Left ventricle myocardium inferior (tissue), 1 donor: ENCODE measurements at regions of chr6 and their contacts with region 1.

Region 1: DNA sequence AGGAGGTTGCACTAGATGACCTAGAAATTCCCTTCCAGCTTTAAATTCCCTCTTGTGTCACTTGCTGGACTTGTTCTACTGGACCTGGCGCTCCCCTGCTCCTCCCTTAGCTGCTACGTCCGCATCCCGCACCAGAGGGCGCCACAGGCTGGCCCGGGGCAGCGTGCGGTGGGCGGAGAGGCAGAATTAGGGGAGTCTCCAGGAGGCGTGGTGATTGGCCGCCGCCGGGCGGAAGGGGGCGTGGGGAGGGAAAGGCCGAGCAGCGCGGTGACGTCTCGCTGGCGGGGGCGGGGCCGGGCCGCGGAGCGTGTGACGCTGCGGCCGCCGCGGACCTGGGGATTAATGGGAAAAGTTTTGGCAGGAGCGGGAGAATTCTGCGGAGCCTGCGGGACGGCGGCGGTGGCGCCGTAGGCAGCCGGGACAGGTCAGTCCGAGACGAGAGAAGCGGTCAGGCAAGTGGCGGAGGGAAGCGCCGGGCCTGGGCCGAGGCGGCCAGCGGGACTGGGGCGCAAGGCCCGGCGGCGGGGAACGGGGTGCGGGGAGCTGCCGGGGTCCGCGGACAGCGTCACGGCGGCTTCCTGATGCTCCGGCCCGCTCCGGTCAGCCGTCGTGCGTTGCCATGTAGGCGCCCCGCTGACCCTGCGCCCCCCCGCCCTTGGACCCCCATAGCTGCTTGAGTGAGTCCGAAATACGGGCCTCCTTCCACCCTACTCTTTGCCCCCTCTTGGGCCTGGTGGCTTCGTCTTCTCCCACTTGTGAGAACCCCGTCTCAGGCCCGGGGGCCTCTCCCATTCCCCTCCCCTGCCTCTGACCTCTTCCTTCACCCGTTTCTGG is at the start of gene PPARD:
- DNase-seq: peak; percentile 98
- H3K4me3 ChIP-seq: peak within 1 kb of the TSS; percentile 91
- H3K27ac ChIP-seq: peak within 1 kb of the TSS; percentile 87
- H3K4me1 ChIP-seq: peaks cover 30% of the 10 kb centered on the region
- H3K27me3 ChIP-seq: peaks cover 8% of the 10 kb centered on the region
- CTCF ChIP-seq: peak; percentile 98
- total RNA-seq, gene PPARD: 14.9 TPM

Region 2: GRCh38 chr6:35419417-35419816 is 76.9 kb after region 1 on chr6:
- intact Hi-C with region 1: no loop called
- DNase-seq: no peak
- H3K4me3 ChIP-seq: no peak overlapping the region
- H3K27ac ChIP-seq: peak overlapping the region; percentile 27
- H3K4me1 ChIP-seq: peaks cover 19% of the 10 kb centered on the region
- H3K27me3 ChIP-seq: no peaks in the 10 kb centered on the region
- CTCF ChIP-seq: no peak

Region 3: DNA sequence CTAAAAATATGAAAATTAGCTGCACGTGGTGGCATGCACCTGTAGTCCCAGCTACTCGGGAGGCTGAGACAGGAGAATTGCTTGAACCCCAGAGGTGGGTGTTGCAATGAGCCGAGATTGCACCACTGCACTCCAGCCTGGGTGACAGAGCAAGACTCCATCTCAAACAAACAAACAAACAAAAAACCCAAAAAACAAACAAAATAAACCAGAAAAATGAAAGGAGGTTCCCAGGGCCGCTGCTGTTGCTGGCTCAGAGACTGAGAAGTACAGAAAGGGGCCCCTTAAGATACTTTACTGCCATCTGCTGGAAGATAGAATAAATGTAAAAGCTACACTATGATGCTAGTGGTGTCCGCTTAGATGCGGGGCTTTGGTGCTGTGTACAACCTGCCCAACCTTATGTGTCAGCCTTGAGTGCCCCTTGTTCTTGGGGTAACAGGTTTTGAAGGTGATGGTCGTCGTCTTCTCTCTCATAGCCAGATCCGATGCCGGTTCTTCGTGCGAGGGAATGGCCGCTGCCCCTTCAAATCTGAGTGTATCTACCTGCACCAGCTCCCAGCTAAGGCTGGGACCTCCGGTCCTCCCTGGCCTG is 106.9 kb after region 1 on chr6:
- intact Hi-C with region 1: loop called (anchors 5 kb)
- DNase-seq: no peak
- H3K4me3 ChIP-seq: no peak overlapping the region
- H3K27ac ChIP-seq: no peak overlapping the region
- H3K4me1 ChIP-seq: peaks cover 32% of the 10 kb centered on the region
- H3K27me3 ChIP-seq: no peaks in the 10 kb centered on the region
- CTCF ChIP-seq: peak; percentile 82